Upper lobe of right lung (tissue), 1 donor: ENCODE measurements at regions of chr20 and their contacts with region 1.

Region 1: GRCh38 chr20:4607287-4607713 is 114.4 kb upstream of the PRND start:
- DNase-seq: no peak
- ATAC-seq: peak; percentile 91
- H3K4me3 ChIP-seq: no peak overlapping the region
- H3K27ac ChIP-seq: no peak overlapping the region
- H3K4me1 ChIP-seq: peaks cover 4% of the 10 kb centered on the region
- H3K27me3 ChIP-seq: peaks cover 6% of the 10 kb centered on the region
- CTCF ChIP-seq: peak; percentile 95

Region 2: DNA sequence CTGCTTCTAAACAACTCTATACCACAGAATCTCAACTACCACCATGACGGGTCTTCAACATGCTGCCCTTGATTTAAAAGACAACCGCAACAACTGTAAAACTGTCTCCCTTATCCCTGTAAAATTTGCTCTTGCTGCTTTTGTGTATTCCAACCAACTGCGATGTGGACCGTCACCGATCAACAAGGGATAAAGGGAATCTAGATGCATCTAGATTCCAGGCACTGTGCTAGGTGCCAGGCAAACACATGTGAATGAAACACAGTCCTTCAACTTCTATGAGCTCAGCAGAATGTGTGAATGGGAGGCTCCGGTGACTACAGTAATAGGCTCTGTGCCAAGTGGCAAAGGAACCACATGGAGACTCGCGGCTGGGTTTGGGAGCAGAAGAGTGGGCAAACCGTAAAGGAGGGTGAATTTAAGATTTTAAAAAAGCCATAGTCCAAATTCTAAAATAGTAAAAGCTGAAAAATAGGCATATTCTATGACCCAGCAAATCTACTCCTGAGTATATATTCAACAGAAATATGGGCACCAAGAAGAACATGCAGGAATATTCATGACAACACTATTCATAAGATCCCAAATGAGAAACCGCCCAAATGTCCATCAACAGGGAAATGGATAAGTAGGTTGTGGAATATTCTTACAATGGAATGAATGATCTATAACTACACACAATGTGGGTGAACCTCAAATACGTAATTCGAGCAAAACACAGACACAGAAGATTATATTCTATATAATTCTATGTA is 110.7 kb after region 1 on chr20:
- intact Hi-C with region 1: loop called (anchors 5 kb)
- DNase-seq: no peak
- ATAC-seq: no peak
- H3K4me3 ChIP-seq: no peak overlapping the region
- H3K27ac ChIP-seq: no peak overlapping the region
- H3K4me1 ChIP-seq: peaks cover 12% of the 10 kb centered on the region
- H3K27me3 ChIP-seq: peaks cover 5% of the 10 kb centered on the region
- CTCF ChIP-seq: no peak